CD4-positive, alpha-beta memory T cell (primary cell): ENCODE measurements at regions of chr19 and their contacts with region 1.

Region 1: DNA sequence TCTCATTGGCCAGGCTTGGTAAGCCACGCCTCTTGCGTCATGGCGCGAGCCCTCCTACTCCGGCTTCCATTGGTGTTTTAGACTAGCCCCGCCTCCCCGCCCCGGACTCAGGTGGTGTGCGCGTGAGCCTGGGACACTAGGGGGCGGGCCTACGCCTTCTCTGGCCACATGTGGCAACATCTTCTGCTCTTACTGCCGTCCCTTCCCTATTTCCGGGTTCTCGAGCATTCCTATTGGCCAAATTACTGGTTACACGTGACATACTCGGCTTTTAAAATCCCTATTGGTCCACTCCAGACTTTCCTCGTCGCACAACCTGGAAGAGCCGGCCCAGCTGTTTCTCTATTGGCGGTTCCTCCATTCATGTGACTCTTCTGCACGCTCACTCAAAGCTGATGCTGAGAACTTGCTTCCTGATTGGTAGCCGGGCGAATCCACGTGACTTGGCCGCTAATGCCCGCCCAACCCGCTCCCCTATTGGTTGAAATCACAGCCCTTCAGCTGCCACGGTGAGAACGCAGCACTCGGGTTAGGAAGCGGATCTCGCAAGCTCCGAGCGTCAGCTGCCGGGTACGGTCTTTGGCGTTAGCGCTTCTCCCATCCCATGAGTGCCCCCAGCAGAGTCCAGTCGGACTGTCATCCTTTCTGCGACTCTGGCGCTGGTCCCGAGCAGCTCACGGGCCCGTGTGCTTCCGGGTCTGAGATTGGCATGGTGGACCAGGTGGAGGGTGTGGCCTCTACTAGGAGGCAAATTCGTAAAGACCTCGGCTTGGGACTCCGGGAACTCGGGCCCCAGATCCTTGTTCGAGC is at the start of gene BLOC1S3:
- DNase-seq: peak; percentile 99 to 100 (median 100)
- H3K4me3 ChIP-seq: peak within 1 kb of the TSS; percentile 97 to 100
- H3K4me3 Mint-ChIP-seq: peak within 1 kb of the TSS; percentile 88 to 99 (median 94)
- H3K27ac ChIP-seq: peak within 1 kb of the TSS; percentile 74
- H3K27ac Mint-ChIP-seq: peak within 1 kb of the TSS; percentile 83 to 99 (median 98)
- H3K4me1 ChIP-seq: peaks cover 43% of the 10 kb centered on the region
- H3K4me1 Mint-ChIP-seq: peaks cover 23 to 62% (median 41%) of the 10 kb centered on the region in 4 donors
- H3K27me3 ChIP-seq: no peaks in the 10 kb centered on the region
- H3K27me3 Mint-ChIP-seq: no peaks in the 10 kb centered on the region
- total RNA-seq, gene BLOC1S3: 26.5 to 29.9 TPM

Region 2: GRCh38 chr19:44890366-44891015 is 288.0 kb before region 1 on chr19:
- CTCF ChIA-PET with region 1: no interaction called
- POLR2A ChIA-PET with region 1: interaction called, 12 read pairs
- intact Hi-C with region 1: loop called (anchors 1 kb)
- DNase-seq: peak; percentile 100
- H3K4me3 ChIP-seq: peak overlapping the region; percentile 36 to 59
- H3K4me3 Mint-ChIP-seq: peak overlapping the region; percentile 80 to 95 (median 89)
- H3K27ac ChIP-seq: peak overlapping the region; percentile 83
- H3K27ac Mint-ChIP-seq: peak overlapping the region; percentile 83 to 97 (median 95)
- H3K4me1 ChIP-seq: peaks cover 22% of the 10 kb centered on the region
- H3K4me1 Mint-ChIP-seq: peaks cover 19 to 35% (median 28%) of the 10 kb centered on the region in 4 donors
- H3K27me3 ChIP-seq: no peaks in the 10 kb centered on the region
- H3K27me3 Mint-ChIP-seq: no peaks in the 10 kb centered on the region

Region 3: GRCh38 chr19:45001087-45001739 is 177.3 kb before region 1 on chr19 and contains the start of gene RELB:
- CTCF ChIA-PET with region 1: no interaction called
- POLR2A ChIA-PET with region 1: interaction called, 11 read pairs
- intact Hi-C with region 1: loop called (anchors 1 kb)
- DNase-seq: peak; percentile 93 to 97 (median 94)
- H3K4me3 ChIP-seq: peak within 1 kb of the TSS; percentile 47 to 69
- H3K4me3 Mint-ChIP-seq: peak within 1 kb of the TSS; percentile 93 to 99 (median 98)
- H3K27ac ChIP-seq: peak within 1 kb of the TSS; percentile 100
- H3K27ac Mint-ChIP-seq: peak within 1 kb of the TSS; percentile 99 to 100 (median 100)
- H3K4me1 ChIP-seq: peaks cover 13% of the 10 kb centered on the region
- H3K4me1 Mint-ChIP-seq: peaks cover 8 to 25% (median 14%) of the 10 kb centered on the region in 4 donors
- H3K27me3 ChIP-seq: no peaks in the 10 kb centered on the region
- H3K27me3 Mint-ChIP-seq: no peaks in the 10 kb centered on the region
- total RNA-seq, gene RELB: 38.8 to 39.8 TPM

Region 4: GRCh38 chr19:45079063-45079910 is 99.2 kb before region 1 on chr19 and contains the start of gene GEMIN7:
- CTCF ChIA-PET with region 1: no interaction called
- POLR2A ChIA-PET with region 1: interaction called, 12 read pairs
- intact Hi-C with region 1: loop called (anchors 1 kb)
- DNase-seq: peak; percentile 66 to 77 (median 72)
- H3K4me3 ChIP-seq: peak within 1 kb of the TSS; percentile 82 to 95
- H3K4me3 Mint-ChIP-seq: peak within 1 kb of the TSS; percentile 89 to 98 (median 93)
- H3K27ac ChIP-seq: peak within 1 kb of the TSS; percentile 80
- H3K27ac Mint-ChIP-seq: peak within 1 kb of the TSS; percentile 84 to 95 (median 88)
- H3K4me1 ChIP-seq: peaks cover 51% of the 10 kb centered on the region
- H3K4me1 Mint-ChIP-seq: peaks cover 25 to 60% (median 44%) of the 10 kb centered on the region in 4 donors
- H3K27me3 ChIP-seq: no peaks in the 10 kb centered on the region
- H3K27me3 Mint-ChIP-seq: no peaks in the 10 kb centered on the region
- total RNA-seq, gene GEMIN7: 15.9 to 17.6 TPM

Region 5: DNA sequence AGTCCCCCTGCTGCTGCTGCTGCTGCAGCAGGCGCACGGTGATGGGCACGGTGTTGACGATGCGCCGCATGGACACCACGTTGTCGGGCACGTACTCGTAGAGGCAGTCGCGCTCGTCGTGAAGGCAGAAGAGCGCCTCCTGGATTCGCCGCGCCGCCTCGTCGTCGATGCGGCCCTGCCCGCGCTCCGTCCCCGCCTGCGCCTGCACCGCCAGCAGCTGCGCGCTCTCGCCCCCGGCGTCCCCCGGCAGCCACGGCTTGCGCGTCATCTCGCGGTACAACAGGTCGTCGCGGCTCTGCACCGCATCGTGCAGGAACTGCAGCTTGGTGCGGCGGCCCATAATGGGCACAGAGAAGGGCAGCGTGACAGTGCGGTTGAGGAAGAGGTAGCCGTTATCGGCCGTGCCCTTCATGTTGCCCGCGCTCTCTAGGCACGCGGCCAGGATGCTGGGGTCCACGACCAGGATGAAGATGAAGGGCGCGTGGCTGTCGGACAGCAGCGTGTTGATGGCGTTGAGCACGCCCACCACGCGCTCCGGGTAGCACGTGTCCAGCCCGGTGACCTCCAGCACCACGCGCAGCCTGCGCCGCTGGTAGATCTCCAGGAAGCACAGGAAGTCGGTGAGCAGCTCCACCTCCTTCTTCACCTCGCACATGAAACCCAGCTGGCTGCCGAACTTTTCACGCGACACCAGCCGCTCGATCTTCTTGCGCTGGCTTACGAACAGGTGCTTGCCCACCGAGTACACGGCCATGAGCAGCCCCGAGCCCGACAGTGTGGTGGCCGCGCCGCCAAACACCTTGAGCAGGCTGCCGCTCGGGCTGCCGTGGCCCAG is 25.7 kb before region 1 on chr19:
- CTCF ChIA-PET with region 1: interaction called, 7 read pairs
- POLR2A ChIA-PET with region 1: interaction called, 54 read pairs
- intact Hi-C with region 1: loop called (anchors 1 kb)
- DNase-seq: peak; percentile 52 to 69 (median 64)
- H3K4me3 ChIP-seq: peak overlapping the region in 1 of 2 donors; percentile 60
- H3K4me3 Mint-ChIP-seq: peak overlapping the region; percentile 79 to 90 (median 82)
- H3K27ac ChIP-seq: no peak overlapping the region
- H3K27ac Mint-ChIP-seq: peak overlapping the region; percentile 73 to 83 (median 76)
- H3K4me1 ChIP-seq: peaks cover 28% of the 10 kb centered on the region
- H3K4me1 Mint-ChIP-seq: peaks cover 14 to 37% (median 25%) of the 10 kb centered on the region in 4 donors
- H3K27me3 ChIP-seq: peaks cover 3% of the 10 kb centered on the region
- H3K27me3 Mint-ChIP-seq: peaks cover 1 to 6% of the 10 kb centered on the region in 2 donors

Region 6: DNA sequence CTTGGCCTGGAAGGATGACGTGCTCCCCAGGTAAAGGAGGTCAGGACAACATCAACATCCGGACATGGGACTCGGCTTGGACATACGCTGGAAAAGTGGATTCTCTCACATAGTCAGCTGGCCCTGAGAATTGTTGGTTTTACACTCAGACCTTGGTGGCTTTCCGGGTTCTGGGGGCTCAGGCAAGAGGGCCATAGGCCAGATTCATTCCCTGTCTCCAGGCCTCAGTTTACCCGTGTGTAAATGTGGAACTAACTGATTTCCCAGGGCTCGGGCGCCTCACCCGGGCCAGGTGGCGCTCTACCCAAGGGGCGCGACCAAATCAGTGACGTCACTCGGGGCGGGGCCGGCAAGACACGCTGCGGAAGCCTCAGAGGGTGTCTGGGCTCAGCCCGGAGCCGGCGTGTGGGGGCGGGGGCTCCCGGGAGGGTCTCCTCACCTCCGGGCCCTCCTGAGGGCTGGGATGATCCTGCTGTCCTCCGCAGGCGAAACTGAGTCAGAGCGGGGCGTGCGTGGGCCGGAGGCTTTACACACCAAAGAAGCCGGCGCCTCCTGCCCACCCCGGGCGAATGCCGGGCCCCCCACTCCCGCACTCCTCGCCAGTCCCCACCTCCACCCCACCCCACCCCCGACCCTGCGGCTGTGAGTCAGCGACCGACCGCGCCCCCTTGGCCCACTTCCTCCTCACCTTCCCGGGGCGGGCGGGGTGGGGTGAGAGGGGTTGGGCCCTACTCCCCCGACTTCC is 328.0 kb after region 1 on chr19:
- CTCF ChIA-PET with region 1: no interaction called
- POLR2A ChIA-PET with region 1: no interaction called
- intact Hi-C with region 1: loop called (anchors 1 kb)
- DNase-seq: peak; percentile 96 to 98 (median 97)
- H3K4me3 ChIP-seq: peak overlapping the region; percentile 95 to 97
- H3K4me3 Mint-ChIP-seq: peak overlapping the region; percentile 87 to 96 (median 94)
- H3K27ac ChIP-seq: peak overlapping the region; percentile 90
- H3K27ac Mint-ChIP-seq: peak overlapping the region; percentile 96 to 99 (median 97)
- H3K4me1 ChIP-seq: peaks cover 35% of the 10 kb centered on the region
- H3K4me1 Mint-ChIP-seq: peaks cover 20 to 61% (median 34%) of the 10 kb centered on the region in 4 donors
- H3K27me3 ChIP-seq: no peaks in the 10 kb centered on the region
- H3K27me3 Mint-ChIP-seq: no peaks in the 10 kb centered on the region